ENCODE measurements at regions of chr19 and their contacts with region 1.

Region 1: DNA sequence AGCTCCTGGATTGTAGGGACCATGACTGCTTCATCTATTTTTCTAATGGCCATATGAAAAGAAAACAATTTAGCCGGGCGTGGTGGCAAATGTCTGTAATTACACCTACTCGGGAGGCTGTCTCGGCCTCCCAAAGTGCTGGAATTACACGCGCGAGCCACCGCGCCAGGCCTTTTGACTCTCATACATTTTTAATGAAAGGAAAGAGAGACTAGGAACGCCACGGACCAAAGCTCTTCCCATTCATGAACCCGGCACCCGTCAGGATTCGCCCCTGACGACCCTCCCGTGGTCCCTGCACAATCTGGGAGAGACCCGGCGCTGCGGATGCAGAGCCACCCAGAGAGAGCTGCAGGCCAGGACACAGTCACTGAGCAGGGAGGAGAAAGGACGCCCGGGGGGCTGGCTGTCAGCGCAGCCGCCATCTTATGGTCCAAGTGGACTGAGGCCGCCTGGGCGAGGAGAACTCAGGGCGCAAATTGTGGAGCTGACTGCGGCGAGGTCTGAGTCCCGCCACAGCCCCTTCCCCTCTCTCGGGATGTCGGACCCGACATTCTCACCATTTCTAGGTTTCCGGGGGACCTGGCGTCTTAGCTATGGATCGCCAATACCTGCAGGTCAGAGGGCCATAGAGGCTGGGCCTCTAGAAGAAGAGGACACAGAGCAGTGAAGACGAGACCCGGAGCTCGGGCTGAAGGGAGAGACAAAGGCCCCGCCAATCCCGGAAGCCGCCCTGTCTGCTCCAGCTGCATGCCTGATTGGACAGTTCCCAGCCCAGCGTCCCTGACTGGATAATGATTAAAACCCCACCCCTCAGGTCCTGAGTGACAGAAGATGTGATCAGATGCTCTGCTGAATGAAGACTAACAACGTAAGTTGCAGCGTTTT is at the start of gene ZNF681:
- DNase-seq: peak; percentile 73 to 95 (median 80)
- ATAC-seq: peak; percentile 88
- H3K4me3 ChIP-seq: peak within 1 kb of the TSS; percentile 85
- H3K4me3 Mint-ChIP-seq: peak within 1 kb of the TSS; percentile 98
- H3K27ac ChIP-seq: peak within 1 kb of the TSS; percentile 64 to 80
- H3K27ac Mint-ChIP-seq: peak within 1 kb of the TSS; percentile 98
- H3K4me1 ChIP-seq: peaks cover 25% of the 10 kb centered on the region
- H3K4me1 Mint-ChIP-seq: peaks cover 32% of the 10 kb centered on the region
- H3K27me3 ChIP-seq: no peaks in the 10 kb centered on the region
- H3K27me3 Mint-ChIP-seq: no peaks in the 10 kb centered on the region
- CTCF ChIP-seq: no peak
- total RNA-seq, gene ZNF681: 1.6 to 2.6 TPM

Region 2: DNA sequence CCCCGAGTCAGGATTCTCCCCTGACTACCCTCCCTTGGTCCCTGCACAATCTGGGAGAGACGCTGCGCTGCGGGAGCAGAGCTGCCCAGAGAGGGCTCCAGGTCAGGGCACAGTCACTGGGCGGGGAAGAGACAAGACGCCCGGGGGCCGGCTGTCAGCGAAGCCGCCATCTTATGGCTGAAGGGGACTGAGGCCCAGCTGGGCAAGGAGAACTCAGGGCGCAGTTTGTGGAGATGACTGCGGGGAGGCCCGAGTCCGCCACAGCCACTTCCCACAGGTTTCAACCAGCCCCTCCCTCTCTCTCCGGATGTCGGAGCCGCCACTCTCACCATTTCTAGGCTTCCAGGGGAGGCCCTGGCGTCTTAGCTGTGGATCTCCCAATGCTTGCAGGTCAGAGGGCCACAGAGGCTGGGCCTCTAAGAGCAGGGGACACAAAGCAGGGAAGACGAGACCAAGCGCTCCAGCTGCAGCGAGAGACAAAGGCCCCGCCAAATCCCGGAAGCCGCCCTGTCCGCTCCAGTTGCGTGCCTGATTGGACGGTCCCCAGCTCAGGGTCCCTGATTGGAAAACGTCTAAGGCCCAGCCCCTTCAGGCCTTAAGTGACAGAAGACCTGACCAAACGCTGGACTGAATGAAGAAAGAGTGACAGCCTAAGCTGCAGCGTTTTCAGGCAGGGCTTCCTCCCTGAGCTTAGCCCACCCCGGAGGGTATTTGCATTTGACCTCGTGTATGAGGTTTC is 508.4 kb before region 1 on chr19 and contains the start of gene ZNF724:
- CTCF ChIA-PET with region 1: no interaction called
- POLR2A ChIA-PET with region 1: interaction called, 5 read pairs
- intact Hi-C with region 1: loop called in 1 of 2 experiments (anchors 5 kb)
- DNase-seq: peak; percentile 78 to 94 (median 82)
- ATAC-seq: peak; percentile 99
- H3K4me3 ChIP-seq: peak within 1 kb of the TSS; percentile 83
- H3K4me3 Mint-ChIP-seq: peak within 1 kb of the TSS; percentile 98
- H3K27ac ChIP-seq: peak within 1 kb of the TSS; percentile 29 to 55
- H3K27ac Mint-ChIP-seq: peak within 1 kb of the TSS; percentile 83
- H3K4me1 ChIP-seq: peaks cover 12% of the 10 kb centered on the region
- H3K4me1 Mint-ChIP-seq: peaks cover 13% of the 10 kb centered on the region
- H3K27me3 ChIP-seq: no peaks in the 10 kb centered on the region
- H3K27me3 Mint-ChIP-seq: no peaks in the 10 kb centered on the region
- CTCF ChIP-seq: no peak
- total RNA-seq, gene ZNF724: 4.2 to 5.5 TPM

Region 3: DNA sequence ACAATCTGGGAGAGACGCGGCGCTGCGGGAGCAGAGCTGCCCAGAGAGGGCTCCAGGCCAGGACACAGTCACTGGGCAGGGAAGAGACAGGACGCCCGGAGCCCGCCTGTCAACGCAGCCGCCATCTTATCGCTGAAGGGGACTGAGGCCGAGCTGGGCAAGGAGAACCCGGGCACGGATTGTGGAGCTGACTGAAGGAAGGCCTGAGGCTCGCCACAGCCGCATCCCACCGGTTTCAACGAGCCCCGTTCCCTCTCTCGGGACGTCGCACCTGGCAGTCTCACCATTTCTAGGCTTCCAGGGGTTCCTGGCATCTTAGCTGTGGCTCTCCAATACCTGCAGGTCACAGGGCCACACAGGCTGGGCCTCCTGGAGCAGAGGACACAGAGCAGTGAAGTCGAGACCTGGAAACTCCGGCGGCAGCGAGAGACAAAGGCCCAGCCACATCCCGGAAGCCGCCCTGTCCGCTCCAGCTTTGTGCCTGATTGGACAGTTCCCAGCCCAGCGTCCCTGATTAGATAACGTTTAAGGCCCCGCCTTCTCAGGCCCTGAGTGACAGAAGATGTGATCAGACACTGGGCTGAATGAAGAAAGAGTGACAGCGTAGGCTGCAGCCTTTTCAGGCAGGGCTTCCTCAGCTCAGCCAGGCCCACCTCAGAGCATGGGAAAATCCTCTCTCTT is 363.2 kb before region 1 on chr19 and contains the start of gene ZNF91:
- CTCF ChIA-PET with region 1: no interaction called
- POLR2A ChIA-PET with region 1: interaction called, 32 read pairs
- intact Hi-C with region 1: loop called (anchors 2 to 5 kb)
- DNase-seq: peak; percentile 82 to 98 (median 85)
- ATAC-seq: peak; percentile 94
- H3K4me3 ChIP-seq: peak within 1 kb of the TSS; percentile 90
- H3K4me3 Mint-ChIP-seq: peak within 1 kb of the TSS; percentile 96
- H3K27ac ChIP-seq: peak within 1 kb of the TSS; percentile 88 to 95
- H3K27ac Mint-ChIP-seq: peak within 1 kb of the TSS; percentile 96
- H3K4me1 ChIP-seq: peaks cover 29% of the 10 kb centered on the region
- H3K4me1 Mint-ChIP-seq: peaks cover 50% of the 10 kb centered on the region
- H3K27me3 ChIP-seq: no peaks in the 10 kb centered on the region
- H3K27me3 Mint-ChIP-seq: no peaks in the 10 kb centered on the region
- CTCF ChIP-seq: no peak
- total RNA-seq, gene ZNF91: 95.5 to 99.3 TPM

Region 4: GRCh38 chr19:23799321-23799720 is 40.9 kb after region 1 on chr19:
- CTCF ChIA-PET with region 1: interaction called, 5 read pairs
- POLR2A ChIA-PET with region 1: interaction called, 19 read pairs
- intact Hi-C with region 1: loop called in 1 of 2 experiments (anchors 2 kb)
- DNase-seq: peak; percentile 8 to 88 (median 32)
- ATAC-seq: peak; percentile 93
- H3K4me3 ChIP-seq: peak overlapping the region; percentile 37
- H3K4me3 Mint-ChIP-seq: peak overlapping the region; percentile 88
- H3K27ac ChIP-seq: peak overlapping the region; percentile 29 to 52
- H3K27ac Mint-ChIP-seq: peak overlapping the region; percentile 90
- H3K4me1 ChIP-seq: peaks cover 15% of the 10 kb centered on the region
- H3K4me1 Mint-ChIP-seq: peaks cover 46% of the 10 kb centered on the region
- H3K27me3 ChIP-seq: no peaks in the 10 kb centered on the region
- H3K27me3 Mint-ChIP-seq: no peaks in the 10 kb centered on the region
- CTCF ChIP-seq: no peak

Region 5: GRCh38 chr19:23887642-23888041 is 129.2 kb after region 1 on chr19:
- CTCF ChIA-PET with region 1: no interaction called
- POLR2A ChIA-PET with region 1: no interaction called
- intact Hi-C with region 1: no loop called
- DNase-seq: no peak
- ATAC-seq: no peak
- H3K4me3 ChIP-seq: no peak overlapping the region
- H3K4me3 Mint-ChIP-seq: no peak overlapping the region
- H3K27ac ChIP-seq: no peak overlapping the region
- H3K27ac Mint-ChIP-seq: no peak overlapping the region
- H3K4me1 ChIP-seq: no peaks in the 10 kb centered on the region
- H3K4me1 Mint-ChIP-seq: no peaks in the 10 kb centered on the region
- H3K27me3 ChIP-seq: no peaks in the 10 kb centered on the region
- H3K27me3 Mint-ChIP-seq: no peaks in the 10 kb centered on the region
- CTCF ChIP-seq: no peak

Region 6: GRCh38 chr19:23914402-23915301 is 156.2 kb after region 1 on chr19 and contains the start of gene ZNF726:
- CTCF ChIA-PET with region 1: no interaction called
- POLR2A ChIA-PET with region 1: interaction called, 14 read pairs
- intact Hi-C with region 1: loop called (anchors 5 to 10 kb)
- DNase-seq: peak; percentile 72 to 95 (median 79)
- ATAC-seq: peak; percentile 99
- H3K4me3 ChIP-seq: peak within 1 kb of the TSS; percentile 74
- H3K4me3 Mint-ChIP-seq: peak within 1 kb of the TSS; percentile 98
- H3K27ac ChIP-seq: peak within 1 kb of the TSS in 1 of 2 donors; percentile 53
- H3K27ac Mint-ChIP-seq: peak within 1 kb of the TSS; percentile 87
- H3K4me1 ChIP-seq: peaks cover 16% of the 10 kb centered on the region
- H3K4me1 Mint-ChIP-seq: peaks cover 7% of the 10 kb centered on the region
- H3K27me3 ChIP-seq: no peaks in the 10 kb centered on the region
- H3K27me3 Mint-ChIP-seq: no peaks in the 10 kb centered on the region
- CTCF ChIP-seq: no peak
- total RNA-seq, gene ZNF726: 2.6 to 3.5 TPM

Region 7: DNA sequence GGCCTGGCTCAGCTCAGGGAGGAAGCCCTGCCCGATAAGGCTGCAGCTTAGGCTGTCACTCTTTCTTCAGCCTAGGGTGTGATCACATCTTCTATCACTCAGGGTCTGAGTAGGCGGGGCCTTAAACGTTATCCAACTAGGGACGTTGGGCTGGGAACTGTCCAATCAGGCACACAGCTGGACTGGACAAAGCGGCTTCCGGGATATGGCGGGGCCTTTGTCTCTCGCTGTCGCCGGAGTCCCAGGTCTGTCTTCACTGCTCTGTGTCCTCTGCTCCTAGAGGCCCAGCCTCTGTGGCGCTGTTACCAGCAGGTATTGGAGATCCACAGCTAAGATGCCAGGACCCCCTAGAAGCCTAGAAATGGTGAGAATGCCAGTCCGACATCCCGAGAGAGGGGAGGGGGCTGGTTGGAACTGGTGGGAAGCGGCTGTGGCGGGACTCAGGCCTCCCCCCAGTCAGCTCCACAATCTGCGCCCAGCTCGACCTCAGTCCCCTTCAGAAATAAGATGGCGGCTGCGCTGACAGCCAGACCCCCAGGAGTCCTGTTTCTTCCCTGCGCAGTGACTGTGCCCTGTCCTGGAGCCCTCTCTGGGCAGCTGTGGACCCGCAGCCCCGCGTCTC is 328.7 kb after region 1 on chr19 and contains the start of gene ZNF254:
- CTCF ChIA-PET with region 1: no interaction called
- POLR2A ChIA-PET with region 1: interaction called, 10 read pairs
- intact Hi-C with region 1: no loop called
- DNase-seq: peak; percentile 43 to 91 (median 64)
- ATAC-seq: peak; percentile 98
- H3K4me3 ChIP-seq: peak within 1 kb of the TSS; percentile 63
- H3K4me3 Mint-ChIP-seq: peak within 1 kb of the TSS; percentile 92
- H3K27ac ChIP-seq: peak within 1 kb of the TSS; percentile 38 to 61
- H3K27ac Mint-ChIP-seq: peak within 1 kb of the TSS; percentile 87
- H3K4me1 ChIP-seq: peaks cover 10% of the 10 kb centered on the region
- H3K4me1 Mint-ChIP-seq: peaks cover 16% of the 10 kb centered on the region
- H3K27me3 ChIP-seq: no peaks in the 10 kb centered on the region
- H3K27me3 Mint-ChIP-seq: no peaks in the 10 kb centered on the region
- CTCF ChIP-seq: no peak
- total RNA-seq, gene ZNF254: 13.4 to 14.0 TPM